GM12878 (cell line): ENCODE measurements at regions of chr15 and their contacts with region 1.

Region 1: GRCh38 chr15:73633111-73633990 is at the start of gene NPTN:
- DNase-seq: peak; percentile 84
- ATAC-seq: peak; percentile 93
- H3K4me3 ChIP-seq: peak within 1 kb of the TSS; percentile 92
- H3K27ac ChIP-seq: peak within 1 kb of the TSS; percentile 66
- H3K4me1 ChIP-seq: peaks cover 18% of the 10 kb centered on the region
- H3K27me3 ChIP-seq: no peaks in the 10 kb centered on the region
- CTCF ChIP-seq: no peak
- EP300 ChIP-seq: no peak
- POLR2A ChIP-seq: peak; percentile 84
- RAD21 ChIP-seq: no peak
- polyA plus RNA-seq, gene NPTN: 17.8 to 21.9 TPM

Region 2: DNA sequence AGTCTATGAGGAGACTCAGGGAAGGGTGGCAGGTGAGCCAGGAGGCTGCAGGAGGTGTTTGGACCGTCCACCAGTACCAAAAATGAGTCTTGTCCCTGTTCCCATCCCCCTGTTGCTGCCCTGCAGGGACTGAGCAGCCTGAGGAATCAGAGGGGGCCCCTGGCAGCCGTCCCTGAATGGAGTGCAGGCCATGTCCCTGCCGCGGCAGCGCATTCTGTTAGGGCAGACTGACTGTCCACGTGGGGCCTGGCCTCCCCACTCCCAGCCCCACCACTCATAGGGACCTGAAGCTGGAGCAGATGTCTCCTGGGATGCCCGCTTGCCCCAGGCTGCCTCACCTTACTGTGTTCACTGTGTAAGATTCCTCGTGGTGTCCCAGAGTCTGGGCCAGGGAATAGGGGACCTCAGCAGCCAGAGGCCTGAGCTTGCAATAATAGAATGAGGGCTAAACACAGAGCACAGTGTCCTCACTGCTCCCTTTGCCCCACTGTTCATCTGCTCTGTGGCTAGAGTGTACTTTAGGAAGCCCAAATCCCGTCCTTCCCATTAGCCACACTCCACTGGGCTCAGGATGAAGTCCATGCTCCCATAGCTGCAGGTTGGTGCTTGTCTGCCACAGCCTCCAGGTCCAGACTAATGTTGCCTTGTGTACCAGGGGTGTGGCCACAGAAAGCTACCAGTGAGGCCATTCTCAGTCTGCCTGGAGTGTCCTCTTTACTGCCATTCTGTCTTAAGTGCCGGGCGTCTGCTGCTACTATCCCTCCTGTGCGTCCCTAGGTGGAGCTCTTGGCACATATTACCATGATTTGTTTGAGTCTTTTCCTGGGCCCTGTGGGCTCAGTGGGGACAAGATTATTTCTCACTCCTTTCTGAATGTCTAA is 327.8 kb before region 1 on chr15:
- CTCF ChIA-PET with region 1: interaction called, 8 read pairs
- POLR2A ChIA-PET with region 1: interaction called, 3 read pairs
- RAD21 ChIA-PET with region 1: interaction called, 3 read pairs
- SMC1A ChIA-PET with region 1: interaction called, 3 read pairs
- in situ Hi-C with region 1: no loop called
- intact Hi-C with region 1: loop called (anchors 5 kb)
- DNase-seq: no peak
- ATAC-seq: peak; percentile 87
- H3K4me3 ChIP-seq: no peak overlapping the region
- H3K27ac ChIP-seq: no peak overlapping the region
- H3K4me1 ChIP-seq: no peaks in the 10 kb centered on the region
- H3K27me3 ChIP-seq: no peaks in the 10 kb centered on the region
- CTCF ChIP-seq: peak; percentile 48 to 68 (median 67); a peak in 5 of 6 replicates
- EP300 ChIP-seq: no peak
- POLR2A ChIP-seq: no peak
- RAD21 ChIP-seq: peak; percentile 68

Region 3: DNA sequence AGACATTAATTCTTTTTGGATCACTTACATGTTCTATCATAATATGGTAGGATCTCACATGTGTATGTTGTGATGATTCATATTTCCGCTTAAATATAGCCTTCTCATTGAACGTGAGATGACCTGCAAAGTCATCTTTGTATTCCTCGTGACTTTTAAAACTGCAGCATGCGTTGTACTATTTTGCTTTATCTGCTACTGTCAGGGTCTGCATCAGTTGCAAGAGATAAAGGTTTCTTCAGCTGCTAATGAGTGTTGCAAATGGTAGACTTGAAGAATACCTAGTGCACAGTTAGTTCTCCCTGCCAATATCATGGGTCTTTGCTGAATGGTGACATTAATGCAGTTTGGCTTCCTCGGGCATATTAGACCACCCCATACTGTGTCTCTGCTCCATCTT is 158.6 kb before region 1 on chr15:
- CTCF ChIA-PET with region 1: no interaction called
- POLR2A ChIA-PET with region 1: no interaction called
- RAD21 ChIA-PET with region 1: no interaction called
- SMC1A ChIA-PET with region 1: no interaction called
- in situ Hi-C with region 1: no loop called
- intact Hi-C with region 1: no loop called
- DNase-seq: no peak
- ATAC-seq: no peak
- H3K4me3 ChIP-seq: no peak overlapping the region
- H3K27ac ChIP-seq: no peak overlapping the region
- H3K4me1 ChIP-seq: no peaks in the 10 kb centered on the region
- H3K27me3 ChIP-seq: no peaks in the 10 kb centered on the region; a peak in 1 of 4 replicates
- CTCF ChIP-seq: no peak
- EP300 ChIP-seq: no peak
- POLR2A ChIP-seq: no peak
- RAD21 ChIP-seq: no peak

Region 4: GRCh38 chr15:73569370-73569769 is 64.0 kb before region 1 on chr15:
- CTCF ChIA-PET with region 1: interaction called, 250 read pairs
- POLR2A ChIA-PET with region 1: no interaction called
- RAD21 ChIA-PET with region 1: interaction called, 7 read pairs
- SMC1A ChIA-PET with region 1: interaction called, 4 read pairs
- in situ Hi-C with region 1: loop called (anchors 5 kb)
- intact Hi-C with region 1: no loop called
- DNase-seq: no peak
- ATAC-seq: no peak
- H3K4me3 ChIP-seq: no peak overlapping the region
- H3K27ac ChIP-seq: no peak overlapping the region
- H3K4me1 ChIP-seq: no peaks in the 10 kb centered on the region
- H3K27me3 ChIP-seq: no peaks in the 10 kb centered on the region
- CTCF ChIP-seq: no peak
- EP300 ChIP-seq: no peak
- POLR2A ChIP-seq: no peak
- RAD21 ChIP-seq: no peak

Region 5: DNA sequence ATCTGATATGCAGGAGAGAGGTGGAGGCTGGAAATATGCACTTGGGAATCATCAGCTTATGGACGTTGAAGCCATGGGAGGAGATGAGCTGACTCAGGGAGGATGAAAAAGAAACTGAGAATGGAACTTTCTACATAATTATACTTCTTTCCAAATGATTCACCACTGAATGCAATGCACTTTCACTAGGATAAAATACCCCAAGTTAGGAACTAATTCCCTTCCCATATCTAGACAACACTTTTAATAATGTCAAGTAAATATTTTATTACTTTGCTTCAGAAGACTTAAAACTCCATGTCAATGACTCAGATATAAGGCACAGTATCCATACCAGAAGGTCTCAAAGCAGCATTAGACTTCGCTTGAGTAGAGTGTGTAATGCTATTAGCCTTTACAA is 24.4 kb before region 1 on chr15:
- CTCF ChIA-PET with region 1: interaction called, 170 read pairs
- POLR2A ChIA-PET with region 1: interaction called, 14 read pairs
- RAD21 ChIA-PET with region 1: interaction called, 21 read pairs
- SMC1A ChIA-PET with region 1: interaction called, 89 read pairs
- in situ Hi-C with region 1: no loop called
- intact Hi-C with region 1: no loop called
- DNase-seq: no peak
- ATAC-seq: peak; percentile 59
- H3K4me3 ChIP-seq: no peak overlapping the region
- H3K27ac ChIP-seq: 0 out of 2 replicates have a peak overlapping the region, but pooled peaks have one; percentile 16
- H3K4me1 ChIP-seq: peaks cover 27% of the 10 kb centered on the region; the same call in 1 of the 2 replicates
- H3K27me3 ChIP-seq: no peaks in the 10 kb centered on the region
- CTCF ChIP-seq: no peak
- EP300 ChIP-seq: no peak
- POLR2A ChIP-seq: no peak
- RAD21 ChIP-seq: no peak

Region 6: DNA sequence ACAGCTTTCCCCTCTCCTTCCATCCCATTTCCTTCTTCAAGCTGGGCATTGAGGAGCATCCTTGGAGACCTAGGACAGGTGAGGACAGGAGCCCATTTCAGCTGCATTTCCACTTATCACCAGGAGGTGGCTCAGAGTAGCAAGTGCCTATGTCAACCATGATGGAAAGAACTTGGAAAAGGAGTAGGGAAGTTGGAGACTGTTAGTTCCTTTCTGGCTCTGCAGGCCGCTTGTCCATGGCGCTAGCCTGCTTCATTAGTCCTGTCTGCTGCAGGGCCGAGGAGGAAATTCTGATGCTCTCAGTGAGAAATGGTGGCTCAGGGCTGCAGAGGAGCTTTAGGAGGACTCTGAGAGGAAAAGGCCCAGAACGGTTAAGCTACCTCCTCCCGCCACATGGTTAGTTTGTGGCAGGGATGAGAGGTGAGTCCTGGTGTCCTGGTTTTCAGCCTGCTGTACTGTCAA is 43.8 kb after region 1 on chr15:
- CTCF ChIA-PET with region 1: interaction called, 25 read pairs
- POLR2A ChIA-PET with region 1: no interaction called
- RAD21 ChIA-PET with region 1: interaction called, 4 read pairs
- SMC1A ChIA-PET with region 1: interaction called, 3 read pairs
- in situ Hi-C with region 1: no loop called
- intact Hi-C with region 1: no loop called
- DNase-seq: no peak
- ATAC-seq: peak; percentile 78
- H3K4me3 ChIP-seq: no peak overlapping the region
- H3K27ac ChIP-seq: no peak overlapping the region
- H3K4me1 ChIP-seq: no peaks in the 10 kb centered on the region
- H3K27me3 ChIP-seq: peaks cover 2% of the 10 kb centered on the region in 2 experiments; a peak in 2 of 4 replicates
- CTCF ChIP-seq: peak; percentile 73 to 89 (median 82)
- EP300 ChIP-seq: no peak
- POLR2A ChIP-seq: no peak
- RAD21 ChIP-seq: peak; percentile 59

Region 7: DNA sequence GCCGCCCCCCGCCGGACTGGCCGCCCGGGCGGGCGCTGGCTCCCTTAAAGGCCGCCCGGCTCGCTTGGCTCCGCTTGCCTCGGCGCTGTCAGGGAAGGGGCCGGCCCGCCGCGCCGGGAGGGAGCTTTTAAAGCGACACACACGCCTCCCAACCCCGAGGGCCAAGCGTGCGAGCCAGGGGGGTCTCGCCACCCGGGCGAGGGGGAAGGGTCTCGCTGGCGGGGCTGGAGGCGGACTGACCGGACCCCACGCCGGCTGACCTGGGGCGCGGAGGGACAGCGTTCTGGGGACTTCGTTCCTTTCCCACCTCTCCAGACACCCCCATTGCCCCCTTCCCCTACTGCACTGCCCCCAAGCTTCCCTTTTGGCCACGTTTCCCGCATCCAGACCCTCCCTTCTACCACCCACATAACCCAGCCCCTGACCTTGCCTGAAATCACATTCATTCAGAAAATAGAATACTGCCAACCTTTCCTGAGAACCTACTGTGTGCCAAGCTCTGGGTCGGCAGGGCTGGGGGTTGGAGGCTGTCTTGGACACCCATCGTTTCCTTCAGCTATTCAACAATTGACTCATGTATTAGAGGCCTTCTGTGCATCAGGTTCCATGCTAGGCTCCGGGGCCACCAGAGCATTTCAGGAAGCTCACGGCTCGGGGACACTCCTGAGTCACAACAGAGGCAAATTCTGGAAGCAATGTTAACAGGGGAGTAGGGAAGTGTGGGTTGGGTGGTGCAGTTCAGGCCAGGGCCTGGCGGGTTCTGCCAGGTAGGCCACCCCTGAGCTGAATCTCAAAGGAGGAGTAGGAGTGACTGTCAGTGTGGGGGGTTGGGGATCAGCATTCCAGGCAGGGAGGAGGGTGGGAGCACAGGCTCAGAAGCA is 120.1 kb after region 1 on chr15 and contains the start of gene INSYN1:
- CTCF ChIA-PET with region 1: no interaction called
- POLR2A ChIA-PET with region 1: no interaction called
- RAD21 ChIA-PET with region 1: no interaction called
- SMC1A ChIA-PET with region 1: no interaction called
- in situ Hi-C with region 1: no loop called
- intact Hi-C with region 1: no loop called
- DNase-seq: no peak
- ATAC-seq: no peak
- H3K4me3 ChIP-seq: no peak within 1 kb of the TSS
- H3K27ac ChIP-seq: no peak within 1 kb of the TSS
- H3K4me1 ChIP-seq: no peaks in the 10 kb centered on the region
- H3K27me3 ChIP-seq: peaks cover 5 to 7% of the 10 kb centered on the region in 2 experiments; a peak in 3 of 4 replicates
- CTCF ChIP-seq: no peak
- EP300 ChIP-seq: no peak
- POLR2A ChIP-seq: no peak
- RAD21 ChIP-seq: no peak
- polyA plus RNA-seq, gene INSYN1: not detected

Region 8: GRCh38 chr15:74906446-74907162 is 1273.3 kb after region 1 on chr15 and contains the start of gene FAM219B:
- CTCF ChIA-PET with region 1: no interaction called
- POLR2A ChIA-PET with region 1: no interaction called
- RAD21 ChIA-PET with region 1: no interaction called
- SMC1A ChIA-PET with region 1: no interaction called
- in situ Hi-C with region 1: no loop called
- intact Hi-C with region 1: no loop called
- DNase-seq: peak; percentile 47
- ATAC-seq: peak; percentile 98
- H3K4me3 ChIP-seq: peak within 1 kb of the TSS; percentile 97
- H3K27ac ChIP-seq: peak within 1 kb of the TSS; percentile 76
- H3K4me1 ChIP-seq: peaks cover 6% of the 10 kb centered on the region
- H3K27me3 ChIP-seq: no peaks in the 10 kb centered on the region
- CTCF ChIP-seq: 0 out of 6 replicates have a peak, but pooled peaks of 1 of the 3 experiments have one; percentile 1
- EP300 ChIP-seq: no peak
- POLR2A ChIP-seq: peak; percentile 82
- RAD21 ChIP-seq: no peak
- polyA plus RNA-seq, gene FAM219B: 7.6 to 8.9 TPM